Astrocyte of the cerebellum (primary cell): ENCODE measurements at regions of chr6 and their contacts with region 1.

Region 1: GRCh38 chr6:32971581-32972352 is 3.4 kb downstream of the BRD2 start:
- DNase-seq: peak; percentile 100
- H3K4me3 ChIP-seq: peak overlapping the region; percentile 92
- CTCF ChIP-seq: no peak

Region 2: GRCh38 chr6:32843979-32844838 is 127.6 kb before region 1 on chr6 and contains the start of gene PSMB8:
- in situ Hi-C with region 1: loop called (anchors 10 kb)
- DNase-seq: peak; percentile 81
- H3K4me3 ChIP-seq: peak within 1 kb of the TSS; percentile 81
- CTCF ChIP-seq: peak; percentile 35